Dorsolateral prefrontal cortex (tissue), 120 donors: ENCODE measurements at regions of chr10 and their contacts with region 1.

Region 1: GRCh38 chr10:3785257-3785850 is 345 bp upstream of the KLF6 start:
- DNase-seq: peak; percentile 96 to 99 (median 98)
- H3K4me3 ChIP-seq: peak overlapping the region; percentile 69 to 100 (median 93)
- H3K27ac ChIP-seq: peak overlapping the region; percentile 90 to 100 (median 99)
- H3K27me3 ChIP-seq: no peaks in the 10 kb centered on the region
- CTCF ChIP-seq: peak in 6 of 56 donors; percentile 10 to 35 (median 14)

Region 2: DNA sequence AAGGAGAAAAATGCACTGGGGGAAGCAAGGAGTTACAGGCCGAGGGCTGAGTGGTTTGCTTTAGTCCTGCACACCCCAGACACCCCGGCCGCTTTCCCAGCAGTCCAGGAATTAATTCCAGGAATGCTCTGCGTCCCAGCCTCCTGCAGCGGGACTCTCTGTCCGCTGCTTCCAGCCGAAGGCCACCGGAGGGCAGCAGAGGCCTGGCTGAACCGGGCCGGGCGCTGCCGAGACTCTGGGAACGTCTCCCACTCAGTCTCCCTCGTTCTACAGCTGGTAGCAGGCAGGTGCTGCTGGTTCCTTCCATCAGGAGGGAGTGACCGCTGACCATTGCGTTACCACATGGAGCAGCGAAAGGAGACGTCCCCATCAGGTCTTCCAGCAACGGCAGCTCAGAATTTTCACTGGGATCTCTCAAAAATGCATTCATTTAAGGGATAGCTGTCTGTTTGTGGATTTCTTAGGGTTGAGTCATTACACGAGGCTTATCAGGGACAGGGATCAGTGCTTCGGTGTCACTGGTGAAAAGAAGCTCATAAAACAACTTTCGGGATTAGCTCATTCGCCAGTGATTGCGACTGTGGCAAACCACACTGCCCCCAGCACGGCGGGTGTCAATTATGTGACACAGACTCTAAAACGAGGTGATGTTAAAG is 587.9 kb before region 1 on chr10:
- intact Hi-C with region 1: loop called in 1 of 2 experiments (anchors 10 kb)
- DNase-seq: peak; percentile 65 to 88 (median 77)
- H3K4me3 ChIP-seq: peak overlapping the region in 51 of 59 donors; percentile 1 to 62 (median 34)
- H3K27ac ChIP-seq: peak overlapping the region in 3 of 59 donors; percentile 2 to 51 (median 22)
- H3K27me3 ChIP-seq: peaks cover 0 to 6% (median 0%) of the 10 kb centered on the region in 45 donors
- CTCF ChIP-seq: peak; percentile 37 to 94 (median 84)

Region 3: DNA sequence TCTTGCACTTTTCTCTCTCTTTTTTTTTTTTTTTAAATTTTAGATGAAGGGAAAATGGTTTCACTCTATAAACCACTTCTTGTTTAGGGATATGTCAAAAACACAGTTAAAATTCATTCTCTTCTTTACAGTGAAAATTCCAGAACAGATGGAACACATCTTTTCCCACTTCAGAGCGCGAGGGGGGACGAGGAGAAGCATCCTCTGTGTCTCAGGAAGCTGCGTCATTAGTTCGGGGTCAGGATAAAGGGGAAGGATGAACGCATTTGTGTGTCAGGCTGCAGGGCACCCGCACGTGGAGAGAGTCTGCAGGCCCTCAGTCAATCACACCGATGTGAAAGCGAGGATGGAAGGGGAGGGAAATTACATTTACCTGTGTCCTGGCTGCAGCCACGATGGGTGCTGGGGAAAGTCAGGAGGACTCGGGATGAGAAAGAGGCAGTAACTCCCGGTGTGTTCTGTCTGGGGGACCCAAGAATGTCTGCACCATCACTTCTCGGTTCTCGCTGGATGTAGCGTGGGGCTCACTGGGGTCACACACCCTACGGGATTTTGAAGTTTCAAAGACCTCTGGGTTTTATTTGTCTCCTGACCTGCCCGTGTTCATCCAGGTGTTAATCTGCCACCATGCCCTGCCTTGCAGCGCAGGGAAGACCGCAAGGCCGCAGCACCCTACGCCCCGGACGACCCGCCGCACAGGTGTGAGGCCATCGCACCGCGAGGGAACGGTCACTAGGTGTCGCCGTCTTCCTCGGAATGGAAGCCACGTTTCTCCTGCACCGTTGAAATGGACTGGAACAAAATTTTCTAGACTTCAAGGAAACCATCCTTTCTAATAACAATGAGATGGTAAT is 546.1 kb before region 1 on chr10:
- intact Hi-C with region 1: loop called (anchors 2 to 5 kb)
- DNase-seq: peak in 9 of 10 donors; percentile 34 to 80 (median 71)
- H3K4me3 ChIP-seq: peak overlapping the region in 7 of 59 donors; percentile 2 to 32 (median 19)
- H3K27ac ChIP-seq: no peak overlapping the region
- H3K27me3 ChIP-seq: peaks cover 0 to 25% (median 0%) of the 10 kb centered on the region in 45 donors
- CTCF ChIP-seq: peak; percentile 68 to 97 (median 91)

Region 4: GRCh38 chr10:3408603-3409365 is 376.6 kb before region 1 on chr10:
- intact Hi-C with region 1: loop called in 1 of 2 experiments (anchors 5 kb)
- DNase-seq: no peak
- H3K4me3 ChIP-seq: no peak overlapping the region
- H3K27ac ChIP-seq: no peak overlapping the region
- H3K27me3 ChIP-seq: no peaks in the 10 kb centered on the region
- CTCF ChIP-seq: no peak

Region 5: GRCh38 chr10:3472287-3473051 is 312.9 kb before region 1 on chr10:
- intact Hi-C with region 1: loop called (anchors 5 kb)
- DNase-seq: peak in 6 of 10 donors; percentile 54 to 84 (median 64)
- H3K4me3 ChIP-seq: peak overlapping the region; percentile 7 to 67 (median 45)
- H3K27ac ChIP-seq: peak overlapping the region; percentile 66 to 97 (median 91)
- H3K27me3 ChIP-seq: no peaks in the 10 kb centered on the region
- CTCF ChIP-seq: peak in 5 of 56 donors; percentile 7 to 23 (median 12)

Region 6: DNA sequence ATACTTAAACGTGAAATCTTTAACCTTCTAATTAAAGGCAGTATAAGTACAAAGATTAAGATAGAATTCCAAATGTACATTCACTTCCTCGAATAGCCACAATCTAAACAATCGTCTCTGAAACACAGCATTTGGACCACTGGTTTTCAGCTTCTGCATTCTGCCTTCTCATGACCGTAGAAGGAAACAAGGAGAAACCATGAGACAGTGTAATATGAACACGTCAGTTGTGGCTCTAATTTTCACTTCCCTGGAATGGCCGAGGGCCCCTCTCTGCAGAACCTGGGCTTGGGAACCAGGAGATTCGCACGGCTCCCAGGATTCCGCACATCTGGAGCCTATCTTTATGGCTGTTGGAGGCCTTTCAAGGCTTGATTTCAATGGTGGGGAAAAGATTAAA is 189.6 kb before region 1 on chr10:
- intact Hi-C with region 1: no loop called
- DNase-seq: no peak
- H3K4me3 ChIP-seq: no peak overlapping the region
- H3K27ac ChIP-seq: no peak overlapping the region
- H3K27me3 ChIP-seq: no peaks in the 10 kb centered on the region
- CTCF ChIP-seq: no peak

Region 7: DNA sequence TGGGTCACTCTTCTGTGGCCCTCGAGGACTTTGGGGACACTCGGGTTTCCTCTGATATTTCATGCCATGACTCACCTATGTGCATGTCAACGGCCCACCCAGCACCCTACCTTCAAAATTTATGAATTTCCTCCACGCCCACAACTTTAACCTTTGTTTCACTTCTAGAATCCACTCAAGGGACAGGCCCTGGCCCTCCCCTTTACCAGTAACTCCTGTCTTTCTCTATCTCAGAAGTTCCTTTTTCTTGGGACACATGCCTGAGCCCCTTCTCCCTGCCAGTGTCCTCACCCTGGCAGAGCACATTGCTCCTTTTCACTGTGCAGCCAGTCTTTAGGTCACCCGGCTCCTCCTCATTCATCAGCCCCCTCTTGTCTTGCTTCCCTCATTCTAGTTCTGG is 282.2 kb after region 1 on chr10:
- intact Hi-C with region 1: no loop called
- DNase-seq: no peak
- H3K4me3 ChIP-seq: no peak overlapping the region
- H3K27ac ChIP-seq: no peak overlapping the region
- H3K27me3 ChIP-seq: peaks cover 0 to 3% (median 0%) of the 10 kb centered on the region in 45 donors
- CTCF ChIP-seq: no peak

Region 8: DNA sequence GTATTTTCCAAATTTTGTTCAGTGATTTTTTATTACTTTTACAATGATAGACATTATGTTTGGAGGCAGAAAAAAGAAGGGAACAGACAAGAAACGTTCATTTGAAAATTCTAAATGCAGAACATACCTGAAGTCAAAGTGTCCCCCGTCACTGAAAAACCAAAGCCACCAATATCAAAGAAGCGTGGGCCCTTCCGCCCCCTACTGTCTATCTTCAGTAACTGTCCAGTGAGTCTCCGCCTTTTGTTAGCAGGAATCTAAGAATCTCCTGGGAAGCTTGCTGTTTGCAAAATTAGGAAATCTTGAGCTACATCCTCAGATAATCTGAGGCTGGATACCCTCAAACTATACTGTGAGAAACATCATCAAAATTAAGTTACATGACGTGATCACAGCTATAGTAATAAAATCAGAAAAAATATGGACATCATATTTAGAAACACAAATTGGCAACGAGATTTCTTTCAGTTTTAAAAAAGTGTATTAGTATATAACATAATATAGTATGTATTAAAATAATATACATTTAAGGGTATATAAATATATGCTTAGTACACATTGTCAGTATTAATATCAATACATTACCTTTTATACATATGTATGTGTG is 871.3 kb after region 1 on chr10:
- intact Hi-C with region 1: loop called in 1 of 2 experiments (anchors 10 kb)
- DNase-seq: peak in 6 of 10 donors; percentile 32 to 68 (median 58)
- H3K4me3 ChIP-seq: no peak overlapping the region
- H3K27ac ChIP-seq: no peak overlapping the region
- H3K27me3 ChIP-seq: no peaks in the 10 kb centered on the region
- CTCF ChIP-seq: peak; percentile 66 to 97 (median 88)